ENCODE measurements at regions of chr6 and their contacts with region 1.

Region 1: DNA sequence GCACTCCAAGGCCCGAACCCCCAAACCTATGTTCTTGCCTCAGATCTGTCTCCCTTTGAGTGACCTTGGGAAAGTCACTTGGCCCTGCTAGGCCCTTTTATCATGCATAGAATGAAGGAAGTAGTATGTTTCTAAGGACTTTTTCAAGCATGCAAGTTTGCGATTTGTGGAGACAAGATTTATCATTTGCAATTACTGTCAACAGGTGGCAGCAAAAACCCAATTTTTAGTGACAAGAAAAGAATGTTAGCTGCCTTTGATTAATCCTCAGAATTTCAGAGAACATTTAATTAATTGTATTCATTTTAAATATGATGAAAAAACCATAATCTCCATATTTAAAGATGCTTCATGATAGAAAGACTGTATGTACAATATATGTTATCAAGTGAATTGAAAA is 28.3 kb upstream of the PREP start:
- DNase-seq: no peak
- H3K4me3 ChIP-seq: no peak overlapping the region
- H3K27ac ChIP-seq: no peak overlapping the region
- H3K4me1 ChIP-seq: peaks cover 0 to 8% (median 0%) of the 10 kb centered on the region in 4 donors
- H3K27me3 ChIP-seq: no peaks in the 10 kb centered on the region
- CTCF ChIP-seq: peak; percentile 10 to 49 (median 28)
- EP300 ChIP-seq: no peak
- POLR2A ChIP-seq: no peak

Region 2: GRCh38 chr6:105509506-105510331 is 78.5 kb after region 1 on chr6:
- intact Hi-C with region 1: no loop called
- DNase-seq: no peak
- H3K4me3 ChIP-seq: no peak overlapping the region
- H3K27ac ChIP-seq: no peak overlapping the region
- H3K4me1 ChIP-seq: peaks cover 0 to 6% (median 1%) of the 10 kb centered on the region in 4 donors
- H3K27me3 ChIP-seq: no peaks in the 10 kb centered on the region
- CTCF ChIP-seq: no peak
- EP300 ChIP-seq: no peak
- POLR2A ChIP-seq: no peak

Region 3: GRCh38 chr6:106223300-106223930 is 792.2 kb after region 1 on chr6:
- intact Hi-C with region 1: loop called (anchors 5 kb)
- DNase-seq: no peak
- H3K4me3 ChIP-seq: no peak overlapping the region
- H3K27ac ChIP-seq: no peak overlapping the region
- H3K4me1 ChIP-seq: no peaks in the 10 kb centered on the region
- H3K27me3 ChIP-seq: no peaks in the 10 kb centered on the region
- CTCF ChIP-seq: peak in 3 of 4 experiments; percentile 31 to 45 (median 39)
- EP300 ChIP-seq: no peak
- POLR2A ChIP-seq: no peak

Region 4: GRCh38 chr6:106300944-106301343 is 869.7 kb after region 1 on chr6:
- intact Hi-C with region 1: loop called (anchors 5 kb)
- DNase-seq: no peak
- H3K4me3 ChIP-seq: no peak overlapping the region
- H3K27ac ChIP-seq: no peak overlapping the region
- H3K4me1 ChIP-seq: no peaks in the 10 kb centered on the region
- H3K27me3 ChIP-seq: no peaks in the 10 kb centered on the region
- CTCF ChIP-seq: peak in 3 of 4 experiments; percentile 12 to 33 (median 26)
- EP300 ChIP-seq: no peak
- POLR2A ChIP-seq: no peak

Measured in sigmoid colon (tissue), 7 donors.